WTC11 (cell line): ENCODE measurements at regions of chr12 and their contacts with region 1.

Region 1: DNA sequence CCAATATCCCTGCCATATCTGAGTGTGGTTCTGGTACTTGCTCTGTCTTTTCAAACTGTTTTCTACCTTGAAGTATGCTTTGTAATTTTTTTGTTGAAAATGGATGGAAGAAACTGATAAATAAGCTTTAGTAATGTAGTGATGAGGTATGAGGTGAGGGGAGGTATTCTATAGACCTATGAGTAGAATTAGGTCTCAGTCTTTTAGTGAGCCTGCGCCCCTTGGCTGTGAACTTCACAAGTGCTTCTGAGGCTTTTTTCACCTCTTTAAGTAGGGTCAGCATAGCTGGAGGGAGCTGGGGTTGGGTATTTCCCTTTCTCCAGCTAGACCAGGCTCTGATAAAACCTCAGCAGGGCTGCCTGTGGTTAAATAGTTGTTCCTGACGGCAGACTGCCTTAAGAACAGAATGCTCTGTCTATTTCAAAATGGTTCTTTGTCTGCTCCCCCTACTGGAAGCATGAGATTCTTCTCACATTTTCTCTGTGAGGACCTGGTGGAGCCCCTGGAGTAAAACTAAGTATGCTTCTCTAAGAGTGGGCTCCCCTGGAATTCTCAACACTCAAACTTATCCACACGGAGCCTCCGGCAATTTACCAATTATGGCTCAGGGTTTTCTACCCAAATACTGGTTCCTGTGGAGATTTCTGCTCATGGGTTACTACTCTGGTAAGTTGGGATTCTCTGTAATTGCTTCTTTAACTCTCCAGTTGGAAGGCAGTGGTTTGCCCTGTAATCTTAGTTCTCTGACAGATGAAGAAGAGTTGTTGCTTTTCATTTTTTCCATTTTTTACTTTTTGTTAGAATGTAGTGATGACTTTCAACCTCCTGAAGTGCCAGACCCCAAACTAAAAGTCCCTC is 13.1 kb downstream of the KRT5 start:
- DNase-seq: no peak
- ATAC-seq: peak; percentile 95
- H3K4me3 Mint-ChIP-seq: no peak overlapping the region
- H3K27ac Mint-ChIP-seq: no peak overlapping the region
- H3K4me1 Mint-ChIP-seq: peaks cover 8% of the 10 kb centered on the region; the same call in 1 of the 2 replicates
- H3K27me3 Mint-ChIP-seq: peaks cover 2% of the 10 kb centered on the region
- CTCF ChIP-seq: peak; percentile 31; the same call in 1 of the 2 replicates

Region 2: DNA sequence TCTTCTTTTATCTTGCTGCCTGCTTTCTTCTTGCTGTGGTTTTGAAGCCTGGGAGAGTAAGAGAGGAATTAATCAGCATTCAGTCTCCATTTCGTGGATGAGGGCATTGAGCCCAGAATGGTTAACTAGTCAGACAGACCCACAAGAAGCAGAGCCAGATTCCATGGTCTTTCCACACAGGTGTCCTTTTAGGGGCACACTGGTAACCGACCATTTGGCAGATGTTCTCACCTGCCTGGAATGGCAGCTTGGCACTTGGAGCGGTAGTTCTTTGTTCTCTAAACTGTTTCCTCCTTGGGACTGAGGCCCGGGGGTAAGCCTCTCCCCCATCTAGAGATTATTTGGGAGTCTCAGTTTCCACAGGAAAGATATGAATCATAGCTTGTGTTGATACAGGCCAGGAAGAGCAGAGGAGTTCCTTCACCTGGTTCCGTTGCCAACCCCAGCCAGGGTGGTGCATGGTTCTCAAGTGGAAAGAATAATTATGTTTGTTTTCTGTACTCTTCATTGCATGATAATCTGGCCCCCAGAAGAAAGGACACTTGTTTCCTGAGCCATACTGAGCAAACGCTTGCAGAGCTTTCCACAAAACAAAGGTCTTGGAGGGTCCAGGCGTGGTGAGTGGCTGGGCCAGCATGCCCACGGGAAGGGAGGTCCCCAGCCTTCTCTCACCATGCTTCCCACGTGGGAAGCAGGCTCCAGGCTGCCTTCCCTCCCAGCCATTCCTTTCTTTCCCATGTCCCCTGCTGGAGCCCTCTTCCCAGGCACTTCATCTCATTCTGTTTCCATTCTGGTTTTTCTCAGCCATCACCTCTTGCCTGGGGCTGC is 70.9 kb before region 1 on chr12:
- CTCF ChIA-PET with region 1: no interaction called
- POLR2A ChIA-PET with region 1: no interaction called
- DNase-seq: no peak
- ATAC-seq: no peak
- H3K4me3 Mint-ChIP-seq: no peak overlapping the region
- H3K27ac Mint-ChIP-seq: no peak overlapping the region
- H3K4me1 Mint-ChIP-seq: peaks cover 9% of the 10 kb centered on the region
- H3K27me3 Mint-ChIP-seq: no peaks in the 10 kb centered on the region
- CTCF ChIP-seq: no peak

Region 3: GRCh38 chr12:52495389-52495788 is 11.7 kb before region 1 on chr12:
- CTCF ChIA-PET with region 1: interaction called, 13 read pairs
- POLR2A ChIA-PET with region 1: no interaction called
- DNase-seq: peak; percentile 50
- ATAC-seq: peak; percentile 77
- H3K4me3 Mint-ChIP-seq: no peak overlapping the region
- H3K27ac Mint-ChIP-seq: no peak overlapping the region
- H3K4me1 Mint-ChIP-seq: peaks cover 27% of the 10 kb centered on the region
- H3K27me3 Mint-ChIP-seq: peaks cover 4% of the 10 kb centered on the region; the same call in 1 of the 2 replicates
- CTCF ChIP-seq: no peak

Region 4: GRCh38 chr12:53014709-53015108 is 507.6 kb after region 1 on chr12:
- CTCF ChIA-PET with region 1: no interaction called
- POLR2A ChIA-PET with region 1: no interaction called
- DNase-seq: no peak
- ATAC-seq: no peak
- H3K4me3 Mint-ChIP-seq: no peak overlapping the region
- H3K27ac Mint-ChIP-seq: no peak overlapping the region; the same call in 1 of the 2 replicates
- H3K4me1 Mint-ChIP-seq: peaks cover 17% of the 10 kb centered on the region
- H3K27me3 Mint-ChIP-seq: no peaks in the 10 kb centered on the region
- CTCF ChIP-seq: no peak